ENCODE measurements at regions of chr11 and their contacts with region 1.

Region 1: DNA sequence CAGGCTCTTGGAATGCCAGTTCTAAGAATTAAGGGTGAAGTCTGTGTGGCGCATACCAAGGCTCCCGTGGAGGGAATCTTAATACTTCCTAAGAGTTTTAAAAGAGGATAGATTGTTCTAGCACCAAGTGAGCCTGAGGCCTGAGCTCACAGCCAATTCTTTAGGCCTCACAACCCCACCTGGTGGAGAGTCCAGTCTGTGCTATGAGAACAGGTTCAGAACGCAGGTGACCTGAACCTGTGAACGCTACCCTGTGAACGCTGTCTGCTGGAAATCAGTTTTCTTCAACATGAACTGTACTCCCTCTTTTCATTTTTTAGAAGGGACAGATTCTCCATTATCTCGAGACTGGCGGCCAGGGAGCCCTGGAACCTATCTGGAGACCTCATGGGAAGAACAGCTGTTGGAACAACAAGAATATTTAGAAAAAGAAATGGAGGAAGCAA is 43.2 kb upstream of the DLAT start:
- DNase-seq: peak; percentile 43
- ATAC-seq: no peak
- H3K4me3 ChIP-seq: no peak overlapping the region
- H3K27ac ChIP-seq: no peak overlapping the region
- H3K4me1 ChIP-seq: peaks cover 11% of the 10 kb centered on the region
- H3K27me3 ChIP-seq: no peaks in the 10 kb centered on the region
- CTCF ChIP-seq: peak; percentile 52
- POLR2A ChIP-seq: no peak
- RAD21 ChIP-seq: peak; percentile 64

Region 2: GRCh38 chr11:111531687-111532364 is 450.2 kb before region 1 on chr11:
- CTCF ChIA-PET with region 1: no interaction called
- POLR2A ChIA-PET with region 1: no interaction called
- dilution Hi-C with region 1: no loop called
- in situ Hi-C with region 1: no loop called
- intact Hi-C with region 1: no loop called
- DNase-seq: peak; percentile 95
- ATAC-seq: peak; percentile 95
- H3K4me3 ChIP-seq: no peak overlapping the region
- H3K27ac ChIP-seq: peak overlapping the region; percentile 66
- H3K4me1 ChIP-seq: peaks cover 1% of the 10 kb centered on the region; the same call in 1 of the 2 replicates
- H3K27me3 ChIP-seq: no peaks in the 10 kb centered on the region
- CTCF ChIP-seq: no peak
- POLR2A ChIP-seq: no peak; the same call in 1 of the 2 replicates
- RAD21 ChIP-seq: no peak

Region 3: GRCh38 chr11:111586388-111586831 is 395.6 kb before region 1 on chr11:
- CTCF ChIA-PET with region 1: no interaction called
- POLR2A ChIA-PET with region 1: no interaction called
- dilution Hi-C with region 1: no loop called
- in situ Hi-C with region 1: loop called (anchors 25 kb)
- intact Hi-C with region 1: no loop called
- DNase-seq: peak; percentile 66
- ATAC-seq: peak; percentile 59
- H3K4me3 ChIP-seq: no peak overlapping the region
- H3K27ac ChIP-seq: no peak overlapping the region
- H3K4me1 ChIP-seq: peaks cover 6% of the 10 kb centered on the region
- H3K27me3 ChIP-seq: 0 out of 2 replicates have a peak, but pooled peaks cover 2% of the 10 kb centered on the region
- CTCF ChIP-seq: peak; percentile 63
- POLR2A ChIP-seq: no peak
- RAD21 ChIP-seq: peak; percentile 61

Region 4: DNA sequence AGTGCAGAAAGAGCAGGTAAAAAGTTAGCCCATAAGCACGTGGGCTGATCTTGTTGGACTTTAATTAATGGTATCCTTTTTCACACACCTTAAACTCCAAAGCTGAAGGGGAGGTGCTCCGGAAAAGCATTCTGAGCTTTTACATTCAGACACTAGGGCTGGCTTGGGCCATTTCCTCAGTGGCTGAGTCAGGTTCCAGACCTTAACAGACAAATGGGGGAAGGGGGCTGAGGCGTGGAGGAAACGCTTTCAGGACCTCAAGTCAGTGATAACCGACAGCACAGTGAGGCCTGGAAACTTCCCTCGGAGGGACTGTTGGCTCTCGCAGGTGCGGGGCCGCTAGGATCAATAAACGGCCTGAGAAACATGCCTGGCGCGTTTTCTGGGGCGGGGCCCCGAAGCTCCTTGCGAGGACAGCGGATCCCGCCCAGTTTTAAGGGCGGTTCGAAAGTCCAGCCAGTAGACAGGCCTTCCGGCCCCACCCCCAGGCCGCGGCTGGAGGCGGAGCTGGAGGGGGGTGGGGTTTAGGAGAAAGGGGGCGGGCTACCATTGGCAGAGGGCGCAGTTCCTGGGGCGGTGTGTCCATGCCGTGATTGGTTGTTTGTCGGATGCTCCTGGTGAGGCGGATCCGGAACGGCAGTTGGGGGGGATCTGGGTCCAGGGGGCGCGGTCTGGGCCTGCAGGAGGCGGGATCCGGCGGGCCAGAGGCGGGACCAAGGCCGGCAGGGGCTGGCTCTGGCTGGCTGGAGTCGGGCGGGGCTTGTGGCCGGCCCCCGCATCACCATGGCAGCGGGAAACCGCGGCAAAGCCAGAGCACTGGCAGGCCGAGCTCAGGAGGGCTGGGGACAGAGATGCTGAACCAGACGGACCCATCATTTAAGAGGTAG is 55.3 kb before region 1 on chr11:
- CTCF ChIA-PET with region 1: interaction called, 13 read pairs
- POLR2A ChIA-PET with region 1: no interaction called
- dilution Hi-C with region 1: no loop called
- in situ Hi-C with region 1: no loop called
- intact Hi-C with region 1: loop called (anchors 1 kb)
- DNase-seq: peak; percentile 96
- ATAC-seq: peak; percentile 95
- H3K4me3 ChIP-seq: peak overlapping the region; percentile 46
- H3K27ac ChIP-seq: peak overlapping the region; percentile 79
- H3K4me1 ChIP-seq: peaks cover 12% of the 10 kb centered on the region
- H3K27me3 ChIP-seq: no peaks in the 10 kb centered on the region
- CTCF ChIP-seq: no peak
- POLR2A ChIP-seq: peak; percentile 74
- RAD21 ChIP-seq: no peak

Region 5: DNA sequence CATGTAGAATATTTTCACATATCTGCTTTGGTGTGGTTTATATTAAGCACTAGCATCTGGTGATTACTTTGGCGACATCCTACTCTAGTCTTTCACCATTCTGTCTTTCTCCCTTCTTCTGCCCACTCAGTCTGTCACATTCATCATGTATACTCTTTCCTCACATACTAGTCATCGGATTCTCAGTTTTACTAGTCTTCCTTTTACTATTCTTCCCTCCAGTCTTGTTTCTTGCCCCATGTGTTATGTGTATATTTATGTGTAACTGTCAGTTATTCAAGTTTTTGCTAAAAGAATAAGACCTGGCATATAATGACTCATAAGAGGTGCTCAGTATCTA is 49.5 kb before region 1 on chr11:
- CTCF ChIA-PET with region 1: interaction called, 13 read pairs
- POLR2A ChIA-PET with region 1: interaction called, 3 read pairs
- dilution Hi-C with region 1: no loop called
- in situ Hi-C with region 1: loop called (anchors 5 kb)
- intact Hi-C with region 1: loop called (anchors 1 kb)
- DNase-seq: peak; percentile 28
- ATAC-seq: no peak
- H3K4me3 ChIP-seq: no peak overlapping the region
- H3K27ac ChIP-seq: no peak overlapping the region
- H3K4me1 ChIP-seq: peaks cover 16% of the 10 kb centered on the region
- H3K27me3 ChIP-seq: no peaks in the 10 kb centered on the region
- CTCF ChIP-seq: no peak
- POLR2A ChIP-seq: no peak
- RAD21 ChIP-seq: no peak

Region 6: DNA sequence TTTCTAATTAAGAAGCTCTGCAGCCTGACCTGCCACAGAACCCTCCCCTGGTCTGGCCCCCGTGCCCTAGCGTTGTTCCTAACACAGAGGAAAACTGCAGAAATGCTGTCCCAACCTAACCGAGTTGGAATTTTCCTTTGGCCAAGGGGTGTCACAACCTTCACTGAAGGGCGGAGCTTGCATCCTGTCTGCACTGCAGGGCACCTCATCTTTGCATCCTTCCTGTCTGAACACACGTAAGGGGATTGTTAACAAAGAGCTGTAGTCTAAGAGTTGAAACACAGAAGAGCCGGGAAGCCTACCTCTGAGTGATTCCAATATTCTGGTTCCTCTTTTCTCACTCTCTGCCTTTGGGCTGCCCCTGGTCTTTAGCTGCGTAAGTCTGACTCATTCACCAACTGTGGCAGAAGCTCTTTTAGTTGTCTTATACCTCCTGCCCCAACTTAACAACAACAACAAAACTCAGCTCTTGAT is 43.3 kb before region 1 on chr11:
- CTCF ChIA-PET with region 1: interaction called, 7 read pairs
- POLR2A ChIA-PET with region 1: interaction called, 4 read pairs
- dilution Hi-C with region 1: no loop called
- in situ Hi-C with region 1: loop called (anchors 5 kb)
- intact Hi-C with region 1: no loop called
- DNase-seq: peak; percentile 63
- ATAC-seq: peak; percentile 40
- H3K4me3 ChIP-seq: peak overlapping the region; percentile 1; the same call in 1 of the 2 replicates
- H3K27ac ChIP-seq: peak overlapping the region; percentile 53
- H3K4me1 ChIP-seq: peaks cover 28% of the 10 kb centered on the region
- H3K27me3 ChIP-seq: no peaks in the 10 kb centered on the region
- CTCF ChIP-seq: no peak
- POLR2A ChIP-seq: peak; percentile 44; the same call in 1 of the 2 replicates
- RAD21 ChIP-seq: no peak

Measured in IMR-90 (cell line).